Endothelial cell of umbilical vein (primary cell): ENCODE measurements at regions of chr5 and their contacts with region 1.

Region 1: GRCh38 chr5:116464144-116464708 is 110.4 kb downstream of the SEMA6A start:
- DNase-seq: no peak
- H3K4me3 ChIP-seq: no peak overlapping the region
- H3K27ac ChIP-seq: no peak overlapping the region
- H3K4me1 ChIP-seq: no peaks in the 10 kb centered on the region
- H3K27me3 ChIP-seq: no peaks in the 10 kb centered on the region
- CTCF ChIP-seq: no peak
- POLR2A ChIP-seq: no peak

Region 2: DNA sequence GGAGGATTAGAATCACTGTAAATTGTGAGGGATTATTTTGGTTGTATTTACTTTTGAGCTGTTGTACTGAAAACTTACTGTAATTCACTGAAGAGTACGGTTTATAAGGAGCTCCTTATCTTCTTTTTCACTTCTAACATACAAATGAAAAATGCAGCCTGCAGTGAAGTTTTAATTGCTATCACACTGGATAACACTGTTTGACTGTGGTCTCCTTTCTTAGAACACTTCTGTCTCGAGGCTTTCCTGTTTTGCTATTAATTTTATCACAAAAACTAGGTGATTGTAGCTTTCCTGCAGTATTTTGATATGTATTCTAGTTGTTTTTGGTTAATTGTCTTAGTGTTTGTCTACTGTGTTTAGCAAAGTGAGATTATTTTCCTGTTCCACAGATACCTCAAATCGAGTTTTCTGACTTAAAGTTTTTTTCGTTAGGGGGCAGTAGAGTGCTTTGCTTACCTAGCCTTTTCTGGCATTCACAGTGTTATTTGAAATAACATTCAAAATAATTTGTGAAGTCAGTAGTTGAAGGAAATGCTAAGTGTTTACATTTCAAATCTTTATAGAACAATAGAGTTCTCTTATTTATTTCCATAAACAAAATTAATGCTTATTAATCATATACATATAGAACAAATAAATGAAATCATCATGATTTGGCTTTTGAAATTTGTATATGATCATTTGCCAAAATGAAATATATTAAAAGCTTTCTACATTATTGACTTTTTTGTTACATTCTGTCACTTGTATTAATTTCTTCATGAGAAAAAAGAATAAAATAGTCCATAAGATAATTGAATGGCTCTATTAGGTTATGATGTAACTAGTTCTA is 326.5 kb before region 1 on chr5:
- CTCF ChIA-PET with region 1: no interaction called
- POLR2A ChIA-PET with region 1: no interaction called
- dilution Hi-C with region 1: no loop called
- intact Hi-C with region 1: no loop called
- DNase-seq: peak; percentile 71
- H3K4me3 ChIP-seq: no peak overlapping the region
- H3K27ac ChIP-seq: no peak overlapping the region
- H3K4me1 ChIP-seq: peaks cover 2% of the 10 kb centered on the region
- H3K27me3 ChIP-seq: no peaks in the 10 kb centered on the region
- CTCF ChIP-seq: peak; percentile 52 to 60
- POLR2A ChIP-seq: no peak

Region 3: GRCh38 chr5:116876240-116876840 is 412.1 kb after region 1 on chr5:
- CTCF ChIA-PET with region 1: no interaction called
- POLR2A ChIA-PET with region 1: no interaction called
- dilution Hi-C with region 1: no loop called
- intact Hi-C with region 1: loop called (anchors 5 kb)
- DNase-seq: no peak
- H3K4me3 ChIP-seq: no peak overlapping the region
- H3K27ac ChIP-seq: no peak overlapping the region
- H3K4me1 ChIP-seq: no peaks in the 10 kb centered on the region
- H3K27me3 ChIP-seq: no peaks in the 10 kb centered on the region
- CTCF ChIP-seq: no peak
- POLR2A ChIP-seq: no peak